Activated CD4-positive, alpha-beta T cell treated with anti-CD3 and anti-CD28 coated beads for 36 hours (primary cell): ENCODE measurements at regions of chr19 and their contacts with region 1.

Region 1: DNA sequence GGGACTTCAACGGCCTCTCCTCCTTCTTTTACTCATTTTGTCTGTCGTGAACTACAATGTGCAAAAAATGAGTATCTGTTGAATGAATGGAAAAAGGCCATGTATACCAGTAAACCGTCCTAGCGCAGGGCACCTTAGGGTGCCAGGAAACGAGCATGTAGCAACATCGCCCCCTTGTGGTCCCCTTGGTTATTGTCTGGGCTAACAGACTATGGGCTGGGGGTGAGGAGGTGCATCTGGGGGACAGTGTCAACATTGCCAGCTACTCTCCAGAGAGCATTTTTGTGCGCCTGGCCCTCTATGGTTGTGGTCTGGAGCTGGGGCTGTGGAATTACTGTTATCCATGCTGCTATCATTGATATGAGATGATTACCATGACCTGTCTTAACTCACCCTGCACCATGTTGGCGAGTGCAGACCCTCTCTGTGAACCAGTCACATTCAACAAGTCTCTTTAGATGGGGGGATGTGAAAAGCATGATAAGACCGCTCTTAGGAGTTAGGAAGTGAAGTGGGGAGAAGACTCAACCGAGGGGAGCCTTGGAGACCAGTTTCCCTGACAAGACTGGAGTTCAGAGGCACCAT is 22.8 kb upstream of the SIGLEC11 start:
- DNase-seq: peak; percentile 90
- ATAC-seq: peak; percentile 82
- H3K4me3 Mint-ChIP-seq: no peak overlapping the region
- H3K27ac Mint-ChIP-seq: no peak overlapping the region
- H3K4me1 Mint-ChIP-seq: peaks cover 13% of the 10 kb centered on the region
- H3K27me3 Mint-ChIP-seq: no peaks in the 10 kb centered on the region

Region 2: DNA sequence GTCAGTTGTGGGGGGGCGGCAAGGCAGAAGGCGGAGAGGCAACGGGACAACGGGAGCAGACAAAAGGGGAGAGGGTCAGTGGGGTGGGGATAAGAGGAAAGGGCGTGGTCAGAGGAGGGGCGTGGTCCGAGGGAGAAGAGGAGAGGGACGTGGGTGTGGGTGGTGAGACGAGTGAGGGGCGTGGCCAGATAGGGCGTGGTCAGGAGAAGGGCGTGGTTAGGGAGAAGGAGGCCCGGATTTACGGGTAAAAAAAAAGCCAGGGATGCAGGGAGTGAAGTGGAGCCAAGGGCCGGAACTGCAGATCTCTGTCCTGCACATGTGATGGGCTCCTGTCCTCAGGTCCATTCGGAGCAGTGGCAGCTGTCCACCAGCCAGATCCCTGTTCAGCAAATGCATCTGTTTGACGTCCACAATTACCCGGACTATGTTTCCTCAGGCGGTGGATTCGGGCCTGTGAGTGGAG is 271.3 kb before region 1 on chr19:
- CTCF ChIA-PET with region 1: no interaction called
- POLR2A ChIA-PET with region 1: no interaction called
- intact Hi-C with region 1: loop called in 1 of 2 experiments (anchors 1 kb)
- DNase-seq: no peak
- ATAC-seq: no peak
- H3K4me3 Mint-ChIP-seq: no peak overlapping the region
- H3K27ac Mint-ChIP-seq: no peak overlapping the region
- H3K4me1 Mint-ChIP-seq: peaks cover 6% of the 10 kb centered on the region
- H3K27me3 Mint-ChIP-seq: no peaks in the 10 kb centered on the region

Region 3: GRCh38 chr19:49808711-49809159 is 175.0 kb before region 1 on chr19:
- CTCF ChIA-PET with region 1: interaction called, 4 read pairs
- POLR2A ChIA-PET with region 1: no interaction called
- intact Hi-C with region 1: loop called in 1 of 2 experiments (anchors 5 kb)
- DNase-seq: peak; percentile 95
- ATAC-seq: peak; percentile 52
- H3K4me3 Mint-ChIP-seq: peak overlapping the region; percentile 78
- H3K27ac Mint-ChIP-seq: peak overlapping the region; percentile 73
- H3K4me1 Mint-ChIP-seq: peaks cover 22% of the 10 kb centered on the region
- H3K27me3 Mint-ChIP-seq: no peaks in the 10 kb centered on the region

Region 4: DNA sequence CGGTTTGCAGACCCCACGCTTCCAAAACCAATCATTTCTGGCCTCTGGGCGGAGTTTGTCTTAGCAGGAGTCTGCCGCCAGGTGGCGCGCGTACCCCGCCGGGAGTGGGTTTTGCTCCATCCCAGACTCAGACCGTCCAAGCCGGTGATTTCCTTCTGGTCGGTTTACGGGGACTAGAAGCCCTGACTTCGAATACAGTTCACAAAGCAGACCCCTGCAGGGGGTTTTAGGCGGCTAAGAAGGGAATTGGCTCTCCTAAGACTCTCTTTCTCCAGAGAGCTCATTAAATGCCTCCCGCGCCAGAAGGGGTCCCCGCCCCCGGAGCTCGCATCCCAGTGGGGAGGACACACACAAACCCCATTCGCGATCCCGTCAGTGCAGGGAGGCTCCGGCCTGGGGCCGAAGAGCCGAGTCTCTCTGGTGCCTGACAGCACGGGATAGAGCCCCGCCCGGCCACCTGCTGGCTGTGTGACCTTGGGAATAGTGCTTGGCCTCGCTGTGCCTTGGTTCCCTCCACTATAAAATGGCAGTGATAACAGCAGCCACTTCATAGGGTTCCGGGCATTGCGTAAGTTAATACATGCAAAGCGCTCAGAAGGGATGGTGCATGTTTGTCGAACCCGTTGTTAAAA is 45.9 kb before region 1 on chr19:
- CTCF ChIA-PET with region 1: interaction called, 18 read pairs
- POLR2A ChIA-PET with region 1: interaction called, 3 read pairs
- intact Hi-C with region 1: loop called (anchors 1 kb)
- DNase-seq: peak; percentile 88
- ATAC-seq: peak; percentile 85
- H3K4me3 Mint-ChIP-seq: no peak overlapping the region
- H3K27ac Mint-ChIP-seq: no peak overlapping the region
- H3K4me1 Mint-ChIP-seq: peaks cover 13% of the 10 kb centered on the region
- H3K27me3 Mint-ChIP-seq: peaks cover 4% of the 10 kb centered on the region

Region 5: GRCh38 chr19:49971991-49972411 is 11.7 kb before region 1 on chr19:
- CTCF ChIA-PET with region 1: no interaction called
- POLR2A ChIA-PET with region 1: no interaction called
- intact Hi-C with region 1: loop called in 1 of 2 experiments (anchors 1 kb)
- DNase-seq: no peak
- ATAC-seq: no peak
- H3K4me3 Mint-ChIP-seq: no peak overlapping the region
- H3K27ac Mint-ChIP-seq: no peak overlapping the region
- H3K4me1 Mint-ChIP-seq: no peaks in the 10 kb centered on the region
- H3K27me3 Mint-ChIP-seq: peaks cover 12% of the 10 kb centered on the region

Region 6: GRCh38 chr19:50061650-50062049 is 77.9 kb after region 1 on chr19:
- CTCF ChIA-PET with region 1: no interaction called
- POLR2A ChIA-PET with region 1: no interaction called
- intact Hi-C with region 1: no loop called
- DNase-seq: no peak
- ATAC-seq: no peak
- H3K4me3 Mint-ChIP-seq: no peak overlapping the region
- H3K27ac Mint-ChIP-seq: no peak overlapping the region
- H3K4me1 Mint-ChIP-seq: no peaks in the 10 kb centered on the region
- H3K27me3 Mint-ChIP-seq: peaks cover 4% of the 10 kb centered on the region

Region 7: GRCh38 chr19:50173140-50173539 is 189.4 kb after region 1 on chr19:
- CTCF ChIA-PET with region 1: no interaction called
- POLR2A ChIA-PET with region 1: no interaction called
- intact Hi-C with region 1: no loop called
- DNase-seq: peak; percentile 10
- ATAC-seq: peak; percentile 42
- H3K4me3 Mint-ChIP-seq: no peak overlapping the region
- H3K27ac Mint-ChIP-seq: no peak overlapping the region
- H3K4me1 Mint-ChIP-seq: no peaks in the 10 kb centered on the region
- H3K27me3 Mint-ChIP-seq: peaks cover 19% of the 10 kb centered on the region